ENCODE measurements at regions of chr16 and their contacts with region 1.

Region 1: DNA sequence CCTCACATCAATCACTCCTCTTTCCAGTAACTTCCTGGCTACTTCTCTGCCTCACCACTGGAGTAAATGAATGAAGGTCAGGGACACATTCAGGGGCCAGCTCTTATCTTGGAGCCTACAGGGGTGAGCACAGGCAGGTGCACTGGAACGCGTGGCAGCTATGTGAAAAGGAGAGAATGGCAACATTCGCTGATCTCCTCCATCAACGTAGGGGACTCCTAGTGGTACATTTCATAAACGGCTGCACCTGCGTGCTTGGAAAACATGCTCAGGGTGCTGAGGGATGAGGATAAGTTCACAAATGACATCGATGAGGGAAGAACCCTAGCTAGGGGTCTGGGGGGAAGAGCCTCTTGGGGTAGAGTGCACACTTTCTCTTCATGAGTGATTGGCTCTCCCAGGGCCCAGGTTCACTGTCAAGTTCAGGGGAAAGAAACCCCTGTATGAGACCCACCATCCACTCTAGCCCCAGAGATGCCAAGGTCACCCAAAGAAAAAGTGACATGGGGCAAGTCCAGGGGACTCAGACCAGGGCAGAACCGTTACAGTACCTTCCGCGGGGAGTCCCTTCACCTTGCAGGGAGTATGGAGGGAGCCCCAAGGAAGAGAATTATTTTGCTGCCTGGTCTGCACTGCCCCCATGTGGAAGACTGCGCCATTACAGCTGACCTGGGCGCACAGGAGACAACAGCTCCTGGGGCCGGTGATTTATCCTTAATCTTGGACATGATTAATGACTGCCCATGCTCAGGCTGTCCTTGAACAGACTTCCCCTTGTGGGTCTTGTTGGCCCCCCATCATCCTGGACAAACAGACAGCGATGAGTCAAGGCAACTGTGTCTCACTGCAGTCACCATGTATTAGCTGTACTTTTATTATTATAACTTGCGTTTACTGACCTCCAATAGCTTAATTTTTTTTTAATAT is 30.1 kb downstream of the VAC14 start:
- DNase-seq: peak; percentile 47 to 49
- ATAC-seq: peak in 7 of 8 donors; percentile 61 to 79 (median 76)
- H3K4me3 ChIP-seq: no peak overlapping the region
- H3K27ac ChIP-seq: no peak overlapping the region
- H3K4me1 ChIP-seq: peaks cover 0 to 6% (median 5%) of the 10 kb centered on the region in 9 donors
- H3K27me3 ChIP-seq: no peaks in the 10 kb centered on the region
- CTCF ChIP-seq: peak; percentile 89 to 99 (median 96)

Region 2: DNA sequence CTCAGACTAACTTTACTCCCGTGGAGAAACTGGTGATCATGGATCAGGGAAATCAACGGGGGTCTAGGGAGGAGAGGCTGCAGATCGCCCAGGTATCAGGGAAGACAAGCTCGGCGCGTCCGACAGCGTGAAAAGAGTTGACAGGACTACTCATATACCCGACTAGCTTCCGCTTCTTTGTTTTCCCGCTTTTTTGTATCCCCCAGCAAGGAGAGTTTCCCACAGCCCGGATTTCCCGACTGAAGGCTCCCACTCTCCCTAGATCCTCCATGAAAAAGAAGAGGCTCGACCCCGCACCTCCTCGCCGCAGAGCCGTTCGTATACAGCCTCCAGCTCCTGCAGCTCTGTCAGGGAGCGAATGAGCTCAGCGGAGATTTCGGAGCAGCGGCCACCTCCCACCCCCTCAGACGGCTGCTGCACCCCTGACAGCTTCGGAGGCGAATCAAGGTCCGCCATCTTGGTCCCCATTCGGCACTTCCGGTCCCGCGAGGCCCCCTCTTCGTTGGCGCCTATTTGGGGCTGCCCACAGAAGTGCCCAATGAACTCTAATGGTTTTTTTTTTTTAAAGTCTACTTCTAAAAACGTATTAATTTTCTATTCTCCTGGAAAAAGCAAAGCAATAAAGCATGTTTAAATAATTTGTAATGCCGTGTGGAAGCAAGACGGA is 247.7 kb before region 1 on chr16 and contains the start of gene COG4:
- intact Hi-C with region 1: loop called in 5 of 10 experiments (anchors 5 to 10 kb)
- DNase-seq: peak; percentile 87 to 91
- ATAC-seq: peak; percentile 91 to 96 (median 94)
- H3K4me3 ChIP-seq: peak within 1 kb of the TSS; percentile 66 to 98 (median 83)
- H3K27ac ChIP-seq: peak within 1 kb of the TSS; percentile 77 to 94 (median 88)
- H3K4me1 ChIP-seq: peaks cover 7 to 56% (median 43%) of the 10 kb centered on the region in 9 donors
- H3K27me3 ChIP-seq: no peaks in the 10 kb centered on the region
- CTCF ChIP-seq: no peak
- total RNA-seq, gene COG4: 33.3 to 56.8 (median 40.7) TPM

Region 3: GRCh38 chr16:70529051-70529777 is 241.7 kb before region 1 on chr16:
- intact Hi-C with region 1: loop called in 6 of 10 experiments (anchors 5 to 10 kb)
- DNase-seq: no peak
- ATAC-seq: peak in 1 of 8 donors; percentile 45
- H3K4me3 ChIP-seq: peak overlapping the region in 1 of 10 donors; percentile 6
- H3K27ac ChIP-seq: no peak overlapping the region
- H3K4me1 ChIP-seq: peaks cover 0 to 57% (median 44%) of the 10 kb centered on the region in 9 donors
- H3K27me3 ChIP-seq: no peaks in the 10 kb centered on the region
- CTCF ChIP-seq: peak; percentile 27 to 72 (median 63)

Region 4: DNA sequence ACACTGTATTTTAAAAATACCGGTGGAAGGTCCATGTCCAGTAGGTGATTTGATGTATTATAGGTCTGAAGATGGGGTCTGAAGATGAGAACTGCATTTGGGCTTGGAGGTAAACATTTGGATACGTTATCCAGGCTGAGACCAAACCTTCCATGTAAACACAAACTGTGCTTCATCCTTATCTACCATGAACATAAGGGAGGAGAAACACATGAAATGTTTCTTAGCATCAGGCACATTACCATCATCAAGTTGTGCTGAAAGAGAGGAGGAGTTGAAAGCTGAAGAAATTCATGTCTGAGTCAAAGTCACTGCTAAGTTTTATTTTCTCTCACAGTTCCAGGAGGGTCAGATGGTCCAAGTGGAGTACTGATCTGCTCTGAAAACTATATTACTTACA is 235.9 kb before region 1 on chr16:
- intact Hi-C with region 1: loop called in 1 of 10 experiments (anchors 10 kb)
- DNase-seq: no peak
- ATAC-seq: no peak
- H3K4me3 ChIP-seq: no peak overlapping the region
- H3K27ac ChIP-seq: no peak overlapping the region
- H3K4me1 ChIP-seq: peaks cover 0 to 4% (median 0%) of the 10 kb centered on the region in 9 donors
- H3K27me3 ChIP-seq: no peaks in the 10 kb centered on the region
- CTCF ChIP-seq: no peak

Region 5: DNA sequence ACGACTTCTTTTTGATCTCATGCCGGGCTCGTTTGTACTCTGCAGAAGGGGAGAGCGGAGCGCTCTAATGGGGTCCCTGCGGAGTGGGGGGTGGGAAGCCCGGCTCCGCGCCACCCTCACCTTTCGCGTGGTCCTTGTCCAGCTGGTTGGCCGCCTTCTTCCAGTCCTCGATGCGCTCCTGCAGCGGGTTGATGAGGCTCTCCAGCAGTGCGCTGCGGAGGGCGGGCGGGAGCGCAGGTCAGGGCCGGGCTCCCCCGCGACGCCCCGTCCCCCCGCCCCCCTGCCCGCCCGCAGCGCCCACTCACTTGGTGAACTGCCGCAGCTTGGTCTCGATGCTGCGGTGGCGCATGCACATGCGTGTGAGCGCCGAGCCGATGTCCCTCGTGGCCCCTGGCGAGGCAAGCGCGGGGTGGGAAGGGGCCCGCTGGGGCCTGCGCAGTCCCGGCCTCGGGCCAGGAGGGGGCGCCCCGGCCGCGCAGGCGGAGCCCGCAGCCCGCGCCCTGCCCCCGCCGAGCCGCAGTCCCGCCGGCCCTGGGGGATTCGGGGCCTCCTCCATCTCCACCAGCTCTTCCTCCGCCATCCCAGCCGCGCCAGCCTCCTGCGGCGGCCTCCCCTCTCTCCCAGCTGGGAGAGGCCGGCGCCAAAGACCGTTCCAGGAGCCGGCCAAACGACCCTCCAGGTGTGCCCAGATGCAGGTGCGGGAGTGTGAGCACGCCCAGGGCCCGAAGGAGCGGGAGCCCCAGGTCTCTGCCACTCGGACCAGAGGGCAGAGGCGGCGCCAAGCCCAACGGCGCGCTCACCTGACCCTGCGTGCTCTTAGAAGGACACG is 91.0 kb before region 1 on chr16:
- intact Hi-C with region 1: loop called in 9 of 10 experiments (anchors 2 to 5 kb)
- DNase-seq: peak in 1 of 2 donors; percentile 50
- ATAC-seq: peak in 4 of 8 donors; percentile 32 to 62 (median 60)
- H3K4me3 ChIP-seq: no peak overlapping the region
- H3K27ac ChIP-seq: peak overlapping the region in 4 of 10 donors; percentile 9 to 52 (median 36)
- H3K4me1 ChIP-seq: peaks cover 35 to 75% (median 48%) of the 10 kb centered on the region in 9 donors
- H3K27me3 ChIP-seq: peaks cover 0 to 3% (median 0%) of the 10 kb centered on the region in 7 donors
- CTCF ChIP-seq: peak; percentile 31 to 83 (median 58)

Region 6: GRCh38 chr16:70685938-70686375 is 84.9 kb before region 1 on chr16 and contains the start of gene MTSS2:
- intact Hi-C with region 1: loop called in 8 of 10 experiments (anchors 2 to 5 kb)
- DNase-seq: peak; percentile 86 to 89
- ATAC-seq: peak; percentile 23 to 77 (median 70)
- H3K4me3 ChIP-seq: peak within 1 kb of the TSS; percentile 64 to 92 (median 76)
- H3K27ac ChIP-seq: peak within 1 kb of the TSS; percentile 58 to 94 (median 85)
- H3K4me1 ChIP-seq: peaks cover 61 to 91% (median 84%) of the 10 kb centered on the region in 9 donors
- H3K27me3 ChIP-seq: peaks cover 0 to 9% (median 0%) of the 10 kb centered on the region in 7 donors
- CTCF ChIP-seq: no peak
- total RNA-seq, gene MTSS2: 39.8 to 121 (median 62.1) TPM

Region 7: DNA sequence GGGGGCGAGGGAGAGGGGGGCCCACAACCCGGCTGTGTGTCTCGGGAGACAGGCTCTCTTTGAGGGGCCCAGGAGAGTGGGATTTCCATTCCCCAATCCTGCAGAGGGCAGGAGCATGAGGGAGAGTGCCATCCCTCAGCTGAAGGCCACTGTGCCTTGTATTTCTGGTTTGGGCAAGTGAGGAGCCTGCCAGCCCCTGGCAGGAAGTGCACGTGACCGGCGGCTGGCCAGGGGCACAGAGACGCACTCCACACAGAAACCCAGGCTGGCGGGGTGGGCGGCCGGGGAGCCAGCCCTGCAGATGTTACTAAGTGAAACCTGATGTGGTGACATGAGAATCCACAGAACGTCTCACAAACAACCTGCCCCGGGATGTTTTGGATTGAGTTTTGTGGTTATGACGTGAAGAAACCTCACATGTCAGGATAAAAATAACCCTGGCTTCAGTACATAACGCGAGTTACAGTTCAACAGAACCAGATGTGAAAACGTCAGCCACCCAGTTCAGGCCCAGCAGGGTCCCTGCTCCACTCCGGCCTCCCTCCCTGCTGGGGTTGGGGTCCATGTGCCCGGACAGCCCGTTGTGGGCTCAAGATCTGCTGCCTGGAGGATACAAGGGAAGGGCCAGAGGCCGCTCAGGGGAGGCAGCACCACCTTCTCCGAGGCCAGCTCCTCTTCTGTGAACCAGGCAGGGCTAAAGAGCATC is 33.4 kb before region 1 on chr16:
- intact Hi-C with region 1: no loop called
- DNase-seq: peak; percentile 74 to 76
- ATAC-seq: peak; percentile 60 to 85 (median 72)
- H3K4me3 ChIP-seq: peak overlapping the region in 1 of 10 donors; percentile 8
- H3K27ac ChIP-seq: peak overlapping the region; percentile 81 to 92 (median 86)
- H3K4me1 ChIP-seq: peaks cover 32 to 75% (median 45%) of the 10 kb centered on the region in 9 donors
- H3K27me3 ChIP-seq: no peaks in the 10 kb centered on the region
- CTCF ChIP-seq: peak in 1 of 9 donors; percentile 17

Region 8: DNA sequence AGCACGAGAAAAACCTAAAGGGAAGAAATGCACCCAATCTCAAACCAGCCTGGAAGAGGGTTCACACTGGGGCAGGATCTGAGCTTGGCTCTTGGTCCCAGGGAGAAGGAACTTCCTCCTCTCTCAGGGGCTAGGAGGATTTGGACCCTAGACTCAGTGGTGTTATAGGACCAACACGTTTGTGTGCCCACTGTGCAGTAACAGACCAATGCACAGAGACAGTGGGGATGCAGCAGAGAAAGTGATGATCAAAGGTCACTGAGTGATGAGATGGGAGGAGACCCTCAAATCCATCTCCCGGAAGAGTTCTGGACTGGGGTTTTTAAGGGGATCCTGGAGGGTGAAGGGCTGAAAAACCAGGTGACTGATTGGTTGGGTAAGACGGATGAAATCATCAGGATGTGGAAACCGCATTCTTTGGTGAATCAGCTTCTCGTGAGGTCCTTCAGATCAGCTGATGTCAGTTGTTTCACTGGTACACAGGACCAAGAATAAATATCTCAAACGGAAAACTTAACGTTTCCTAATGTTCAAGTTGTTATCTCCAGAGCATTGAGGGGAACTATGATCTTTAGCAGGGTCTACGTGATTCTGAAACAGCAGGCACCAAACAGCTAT is 33.3 kb after region 1 on chr16:
- intact Hi-C with region 1: no loop called
- DNase-seq: no peak
- ATAC-seq: no peak
- H3K4me3 ChIP-seq: no peak overlapping the region
- H3K27ac ChIP-seq: no peak overlapping the region
- H3K4me1 ChIP-seq: peaks cover 5 to 19% (median 14%) of the 10 kb centered on the region in 9 donors
- H3K27me3 ChIP-seq: peaks cover 0 to 28% (median 17%) of the 10 kb centered on the region in 7 donors
- CTCF ChIP-seq: no peak

Region 9: DNA sequence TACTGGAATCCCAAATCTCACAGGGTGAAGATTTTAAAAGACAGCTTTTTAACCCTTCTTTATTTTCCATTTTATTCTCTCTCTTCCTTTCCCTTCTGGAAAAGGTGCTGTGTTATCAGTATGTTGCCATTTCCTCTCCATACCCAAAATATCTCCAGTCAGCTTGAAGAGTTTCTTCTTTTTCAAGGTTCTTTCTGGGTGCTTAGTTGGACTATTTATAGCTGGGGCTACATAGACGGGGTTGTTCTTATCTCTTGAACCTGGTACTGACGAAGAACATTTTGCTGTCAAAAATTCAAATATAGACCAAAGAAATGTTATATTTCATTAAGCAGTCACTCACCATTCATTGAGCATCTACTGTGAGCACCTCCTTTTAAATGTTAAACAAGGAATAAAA is 1173.0 kb after region 1 on chr16:
- intact Hi-C with region 1: no loop called
- DNase-seq: no peak
- ATAC-seq: no peak
- H3K4me3 ChIP-seq: no peak overlapping the region
- H3K27ac ChIP-seq: no peak overlapping the region
- H3K4me1 ChIP-seq: peaks cover 0 to 7% (median 0%) of the 10 kb centered on the region in 9 donors
- H3K27me3 ChIP-seq: no peaks in the 10 kb centered on the region
- CTCF ChIP-seq: no peak

Measured in heart right ventricle (tissue), 16 donors.